Activated naive CD4-positive, alpha-beta T cell treated with anti-CD3 and anti-CD28 coated beads, Interleukin-2, amount 10 ng/mL, durations not matched to agents 7 days and 5 days (primary cell): ENCODE measurements at regions of chr6 and their contacts with region 1.

Region 1: GRCh38 chr6:33607784-33608161 is 13.3 kb upstream of the ITPR3 start:
- DNase-seq: peak; percentile 72
- H3K4me3 Mint-ChIP-seq: no peak overlapping the region
- H3K27ac Mint-ChIP-seq: no peak overlapping the region
- H3K4me1 Mint-ChIP-seq: peaks cover 8% of the 10 kb centered on the region
- H3K27me3 Mint-ChIP-seq: peaks cover 72% of the 10 kb centered on the region

Region 2: DNA sequence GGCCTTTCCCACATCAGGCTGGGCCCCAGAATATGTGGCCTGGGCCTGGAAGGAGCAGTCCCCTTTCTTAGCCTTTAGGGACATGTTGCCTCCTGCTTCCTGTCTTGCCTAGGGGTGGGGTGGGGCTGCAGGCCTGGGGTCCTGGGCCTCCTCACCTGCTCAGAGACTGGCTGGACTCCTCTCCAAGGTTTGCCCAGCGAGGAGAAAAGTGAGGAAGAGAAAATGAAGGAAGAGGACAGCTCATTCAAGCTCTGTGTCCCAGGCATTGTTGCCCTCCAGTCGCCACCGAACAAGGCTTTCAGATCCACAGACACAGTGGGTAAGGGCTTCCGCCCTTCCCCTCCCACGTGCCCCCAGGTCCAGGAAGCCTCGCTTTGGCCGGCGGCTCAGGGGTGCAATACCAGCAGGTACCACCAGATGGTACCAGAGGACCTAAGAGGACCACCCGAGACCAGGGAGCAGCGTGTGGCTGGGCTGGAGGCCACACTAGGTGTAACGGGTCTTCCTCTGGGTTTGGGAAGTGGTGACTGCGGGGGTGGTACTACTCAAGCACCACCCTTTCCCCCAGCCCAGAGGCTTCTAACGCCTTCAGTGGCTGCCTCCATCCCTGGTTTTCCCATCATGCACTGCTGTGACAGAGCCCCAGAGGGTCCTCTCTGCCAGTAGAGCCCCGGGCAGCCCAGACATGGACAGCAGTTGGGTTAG is 22.2 kb before region 1 on chr6:
- CTCF ChIA-PET with region 1: interaction called, 32 read pairs
- DNase-seq: peak; percentile 93
- H3K4me3 Mint-ChIP-seq: peak overlapping the region; percentile 76
- H3K27ac Mint-ChIP-seq: peak overlapping the region; percentile 91
- H3K4me1 Mint-ChIP-seq: peaks cover 33% of the 10 kb centered on the region
- H3K27me3 Mint-ChIP-seq: no peaks in the 10 kb centered on the region

Region 3: GRCh38 chr6:33592411-33593054 is 15.2 kb before region 1 on chr6:
- CTCF ChIA-PET with region 1: interaction called, 32 read pairs
- DNase-seq: peak; percentile 73
- H3K4me3 Mint-ChIP-seq: peak overlapping the region; percentile 69
- H3K27ac Mint-ChIP-seq: peak overlapping the region; percentile 52
- H3K4me1 Mint-ChIP-seq: peaks cover 37% of the 10 kb centered on the region
- H3K27me3 Mint-ChIP-seq: peaks cover 17% of the 10 kb centered on the region

Region 4: GRCh38 chr6:33597551-33598322 is 10.0 kb before region 1 on chr6:
- CTCF ChIA-PET with region 1: interaction called, 13 read pairs
- DNase-seq: no peak
- H3K4me3 Mint-ChIP-seq: no peak overlapping the region
- H3K27ac Mint-ChIP-seq: no peak overlapping the region
- H3K4me1 Mint-ChIP-seq: peaks cover 53% of the 10 kb centered on the region
- H3K27me3 Mint-ChIP-seq: peaks cover 23% of the 10 kb centered on the region

Region 5: GRCh38 chr6:33620856-33621710 is 13.3 kb after region 1 on chr6 and contains the start of gene ITPR3:
- CTCF ChIA-PET with region 1: interaction called, 18 read pairs
- DNase-seq: peak; percentile 86
- H3K4me3 Mint-ChIP-seq: peak within 1 kb of the TSS; percentile 93
- H3K27ac Mint-ChIP-seq: peak within 1 kb of the TSS; percentile 95
- H3K4me1 Mint-ChIP-seq: peaks cover 66% of the 10 kb centered on the region
- H3K27me3 Mint-ChIP-seq: no peaks in the 10 kb centered on the region

Region 6: DNA sequence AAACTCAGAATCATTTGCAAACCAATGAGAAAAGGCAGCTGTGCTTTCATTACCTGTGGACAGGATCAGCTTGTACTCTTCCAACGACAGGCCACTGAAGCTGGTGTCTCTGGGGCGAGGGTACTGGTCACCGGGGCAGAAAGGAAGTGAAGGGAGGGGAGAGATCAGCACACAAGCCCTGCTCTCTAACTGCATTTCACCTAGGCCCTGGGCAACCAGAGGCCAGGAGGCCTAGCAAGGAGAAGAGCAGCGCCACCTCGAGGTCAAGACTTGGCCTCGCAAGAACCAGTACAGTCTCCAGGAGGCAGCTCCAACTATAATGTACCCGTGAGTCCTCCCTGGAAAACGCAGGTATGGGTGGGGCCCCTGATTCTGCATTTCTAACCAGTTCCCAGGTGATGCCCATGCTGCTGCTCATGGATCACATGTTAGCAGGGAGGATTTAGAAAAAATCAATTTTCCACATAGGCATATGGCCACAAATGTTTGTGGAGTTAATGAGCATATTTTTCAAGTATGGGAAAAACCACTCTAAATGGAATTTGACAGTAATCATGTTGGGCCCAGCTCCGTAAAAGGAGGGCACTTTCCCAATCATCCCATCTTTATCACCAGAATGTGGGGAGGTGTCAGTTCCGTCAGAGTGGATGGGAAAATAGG is 92.7 kb after region 1 on chr6:
- CTCF ChIA-PET with region 1: interaction called, 10 read pairs
- DNase-seq: peak; percentile 87
- H3K4me3 Mint-ChIP-seq: no peak overlapping the region
- H3K27ac Mint-ChIP-seq: peak overlapping the region; percentile 35
- H3K4me1 Mint-ChIP-seq: peaks cover 45% of the 10 kb centered on the region
- H3K27me3 Mint-ChIP-seq: no peaks in the 10 kb centered on the region